Heart right ventricle (tissue), 16 donors: ENCODE measurements at regions of chr22 and their contacts with region 1.

Region 1: DNA sequence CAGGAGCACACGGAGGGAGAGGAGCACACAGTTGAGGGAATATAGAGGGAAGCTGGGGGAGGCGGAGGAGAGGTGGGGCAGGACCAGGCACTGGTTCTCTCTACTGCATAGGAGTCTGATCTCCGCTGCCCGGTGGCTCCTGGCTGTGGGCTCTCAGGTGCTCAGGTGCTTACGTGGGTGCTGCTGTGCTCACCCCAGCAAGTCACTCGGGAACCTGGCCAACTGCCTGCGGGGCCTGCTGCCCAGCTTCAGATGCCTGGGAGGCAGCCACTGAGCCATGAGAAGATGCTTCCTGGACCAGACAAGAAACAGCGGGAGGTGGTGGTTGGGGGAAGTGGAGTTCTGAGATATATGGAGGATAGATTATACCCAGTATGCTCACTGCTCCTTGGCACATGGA is 1303.4 kb downstream of the TBC1D22A start:
- DNase-seq: no peak
- ATAC-seq: no peak
- H3K4me3 ChIP-seq: no peak overlapping the region
- H3K27ac ChIP-seq: no peak overlapping the region
- H3K4me1 ChIP-seq: no peaks in the 10 kb centered on the region
- H3K27me3 ChIP-seq: peaks cover 0 to 7% (median 0%) of the 10 kb centered on the region in 7 donors
- CTCF ChIP-seq: no peak

Region 2: GRCh38 chr22:47943729-47944700 is 121.8 kb before region 1 on chr22:
- intact Hi-C with region 1: no loop called
- DNase-seq: no peak
- ATAC-seq: no peak
- H3K4me3 ChIP-seq: no peak overlapping the region
- H3K27ac ChIP-seq: no peak overlapping the region
- H3K4me1 ChIP-seq: no peaks in the 10 kb centered on the region
- H3K27me3 ChIP-seq: peaks cover 0 to 16% (median 0%) of the 10 kb centered on the region in 7 donors
- CTCF ChIP-seq: no peak

Region 3: DNA sequence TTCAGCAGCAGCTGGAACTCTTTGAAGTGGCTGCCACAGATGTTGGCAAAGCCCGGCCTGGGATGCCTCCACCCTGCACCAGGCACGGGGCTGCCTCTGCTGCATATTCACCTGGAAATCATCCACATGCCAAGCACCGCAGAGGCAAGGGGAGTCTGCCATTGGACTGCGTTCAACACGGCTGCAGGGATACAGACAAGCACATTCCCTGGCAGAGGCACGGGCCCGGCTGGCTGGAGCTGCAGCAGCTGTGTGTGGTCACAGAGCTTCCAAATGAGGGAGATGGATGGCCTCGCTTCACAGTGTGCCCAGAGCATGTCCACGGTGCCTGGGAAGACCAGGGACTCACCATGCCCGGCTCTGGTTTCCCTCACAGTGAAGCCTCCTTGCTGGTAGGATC is 75.4 kb after region 1 on chr22:
- intact Hi-C with region 1: loop called in 1 of 10 experiments (anchors 10 kb)
- DNase-seq: no peak
- ATAC-seq: peak in 1 of 8 donors; percentile 26
- H3K4me3 ChIP-seq: no peak overlapping the region
- H3K27ac ChIP-seq: no peak overlapping the region
- H3K4me1 ChIP-seq: no peaks in the 10 kb centered on the region
- H3K27me3 ChIP-seq: peaks cover 0 to 25% (median 19%) of the 10 kb centered on the region in 7 donors
- CTCF ChIP-seq: no peak